ENCODE measurements at regions of chr2 and their contacts with region 1.

Region 1: GRCh38 chr2:230913406-230914143 is 11.5 kb downstream of the GPR55 start:
- DNase-seq: no peak
- H3K4me3 ChIP-seq: no peak overlapping the region
- H3K27ac ChIP-seq: no peak overlapping the region
- H3K4me1 ChIP-seq: peaks cover 0 to 5% (median 0%) of the 10 kb centered on the region in 4 donors
- H3K27me3 ChIP-seq: peaks cover 0 to 10% (median 0%) of the 10 kb centered on the region in 4 donors
- CTCF ChIP-seq: peak; percentile 47 to 64 (median 50)
- EP300 ChIP-seq: no peak
- POLR2A ChIP-seq: no peak

Region 2: GRCh38 chr2:230847883-230848388 is 65.6 kb before region 1 on chr2:
- intact Hi-C with region 1: loop called (anchors 2 kb)
- DNase-seq: no peak
- H3K4me3 ChIP-seq: peak overlapping the region in 3 of 4 donors; percentile 16 to 41 (median 28)
- H3K27ac ChIP-seq: no peak overlapping the region
- H3K4me1 ChIP-seq: peaks cover 4 to 9% (median 8%) of the 10 kb centered on the region in 4 donors
- H3K27me3 ChIP-seq: peaks cover 0 to 20% (median 0%) of the 10 kb centered on the region in 4 donors
- CTCF ChIP-seq: peak; percentile 85 to 96 (median 93)
- EP300 ChIP-seq: no peak
- POLR2A ChIP-seq: no peak

Region 3: GRCh38 chr2:230864598-230865306 is 48.8 kb before region 1 on chr2 and contains the start of gene ITM2C:
- intact Hi-C with region 1: loop called (anchors 2 kb)
- DNase-seq: no peak
- H3K4me3 ChIP-seq: peak within 1 kb of the TSS; percentile 75 to 95 (median 78)
- H3K27ac ChIP-seq: peak within 1 kb of the TSS; percentile 68 to 81 (median 78)
- H3K4me1 ChIP-seq: peaks cover 35 to 57% (median 55%) of the 10 kb centered on the region in 4 donors
- H3K27me3 ChIP-seq: no peaks in the 10 kb centered on the region
- CTCF ChIP-seq: peak; percentile 45 to 53 (median 49)
- EP300 ChIP-seq: no peak
- POLR2A ChIP-seq: no peak
- total RNA-seq, gene ITM2C: 84.0 to 145 (median 101) TPM

Region 4: GRCh38 chr2:231530091-231531011 is 616.8 kb after region 1 on chr2 and contains the start of gene NMUR1:
- intact Hi-C with region 1: no loop called
- DNase-seq: no peak
- H3K4me3 ChIP-seq: peak within 1 kb of the TSS; percentile 56 to 69 (median 63)
- H3K27ac ChIP-seq: peak within 1 kb of the TSS; percentile 47 to 50 (median 48)
- H3K4me1 ChIP-seq: peaks cover 5 to 13% (median 12%) of the 10 kb centered on the region in 4 donors
- H3K27me3 ChIP-seq: peaks cover 0 to 6% (median 1%) of the 10 kb centered on the region in 4 donors
- CTCF ChIP-seq: peak; percentile 76 to 90 (median 82)
- EP300 ChIP-seq: no peak
- POLR2A ChIP-seq: no peak
- total RNA-seq, gene NMUR1: 1.2 to 5.4 (median 2.5) TPM

Measured in esophagus muscularis mucosa (tissue), 4 donors.